ENCODE measurements at regions of chr6 and their contacts with region 1.

Region 1: DNA sequence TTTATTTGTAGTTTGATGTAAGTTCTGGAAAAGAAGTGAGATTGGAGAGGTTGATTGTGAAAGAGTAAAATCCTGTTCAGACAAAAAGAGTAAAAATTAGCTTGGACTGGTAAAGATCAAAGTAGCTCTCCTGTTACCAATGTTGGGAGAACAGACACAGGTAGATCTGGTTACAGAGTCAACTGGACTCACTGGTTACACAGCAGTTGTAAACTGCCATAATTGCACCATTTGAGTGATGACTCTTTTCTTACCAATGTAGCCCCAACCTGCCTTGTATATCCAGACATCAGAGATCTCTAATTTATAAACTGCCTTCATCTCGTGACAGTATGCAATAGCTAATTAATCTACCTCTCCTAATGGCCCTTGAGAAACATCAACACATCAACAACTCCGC is 165.6 kb upstream of the PRSS16 start:
- DNase-seq: no peak
- H3K4me3 ChIP-seq: no peak overlapping the region
- CTCF ChIP-seq: no peak
- POLR2A ChIP-seq: no peak

Region 2: GRCh38 chr6:26607434-26608230 is 474.3 kb before region 1 on chr6:
- intact Hi-C with region 1: loop called (anchors 10 kb)
- DNase-seq: no peak
- H3K4me3 ChIP-seq: no peak overlapping the region
- CTCF ChIP-seq: no peak
- POLR2A ChIP-seq: no peak

Region 3: GRCh38 chr6:27601668-27602254 is 519.8 kb after region 1 on chr6:
- intact Hi-C with region 1: no loop called
- DNase-seq: no peak
- H3K4me3 ChIP-seq: no peak overlapping the region
- CTCF ChIP-seq: no peak
- POLR2A ChIP-seq: no peak

Measured in lower leg skin (tissue), 4 donors.